IMR-90 (cell line): ENCODE measurements at regions of chr2 and their contacts with region 1.

Region 1: GRCh38 chr2:222146488-222146887 is 152.3 kb downstream of the PAX3 start:
- DNase-seq: no peak
- ATAC-seq: no peak
- H3K4me3 ChIP-seq: no peak overlapping the region
- H3K27ac ChIP-seq: no peak overlapping the region
- H3K4me1 ChIP-seq: no peaks in the 10 kb centered on the region
- H3K27me3 ChIP-seq: no peaks in the 10 kb centered on the region
- CTCF ChIP-seq: no peak
- POLR2A ChIP-seq: no peak
- RAD21 ChIP-seq: no peak

Region 2: DNA sequence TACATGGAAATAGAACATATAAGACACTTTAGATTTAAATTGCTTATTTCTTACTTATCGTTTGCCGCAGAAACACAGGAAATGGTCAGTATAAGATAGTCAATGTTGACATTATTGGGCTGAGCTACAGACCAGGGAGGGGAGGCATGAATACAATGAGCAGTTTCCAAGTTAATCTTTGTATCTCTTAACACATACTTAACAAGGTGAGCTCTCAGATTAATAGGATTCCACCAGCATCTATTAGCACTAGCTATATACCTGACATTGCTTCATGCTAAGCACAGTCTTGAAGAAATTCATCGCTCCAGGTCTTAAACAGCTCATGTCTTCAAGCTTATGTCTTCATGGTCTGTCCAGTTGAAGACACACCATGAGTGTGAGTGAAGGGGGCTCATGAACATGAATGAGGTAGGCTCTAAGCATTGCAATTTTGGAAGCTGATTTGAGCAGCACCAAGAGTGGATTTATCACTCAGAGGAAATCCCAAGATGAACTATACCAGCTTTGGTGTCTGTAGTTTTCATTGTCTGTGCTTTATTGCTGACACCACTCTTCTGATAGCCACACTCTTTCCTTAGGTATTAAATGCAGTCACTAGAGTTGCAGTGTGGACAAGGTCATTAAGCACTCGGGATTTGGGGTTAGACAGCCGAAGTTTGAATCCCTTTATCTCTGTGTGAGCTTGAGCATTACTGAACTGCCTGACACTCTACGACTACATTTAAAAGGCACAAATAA is 215.1 kb before region 1 on chr2:
- CTCF ChIA-PET with region 1: no interaction called
- POLR2A ChIA-PET with region 1: no interaction called
- dilution Hi-C with region 1: no loop called
- in situ Hi-C with region 1: no loop called
- intact Hi-C with region 1: no loop called
- DNase-seq: no peak
- ATAC-seq: no peak
- H3K4me3 ChIP-seq: no peak overlapping the region
- H3K27ac ChIP-seq: no peak overlapping the region
- H3K4me1 ChIP-seq: no peaks in the 10 kb centered on the region
- H3K27me3 ChIP-seq: no peaks in the 10 kb centered on the region
- CTCF ChIP-seq: no peak
- POLR2A ChIP-seq: no peak
- RAD21 ChIP-seq: no peak

Region 3: DNA sequence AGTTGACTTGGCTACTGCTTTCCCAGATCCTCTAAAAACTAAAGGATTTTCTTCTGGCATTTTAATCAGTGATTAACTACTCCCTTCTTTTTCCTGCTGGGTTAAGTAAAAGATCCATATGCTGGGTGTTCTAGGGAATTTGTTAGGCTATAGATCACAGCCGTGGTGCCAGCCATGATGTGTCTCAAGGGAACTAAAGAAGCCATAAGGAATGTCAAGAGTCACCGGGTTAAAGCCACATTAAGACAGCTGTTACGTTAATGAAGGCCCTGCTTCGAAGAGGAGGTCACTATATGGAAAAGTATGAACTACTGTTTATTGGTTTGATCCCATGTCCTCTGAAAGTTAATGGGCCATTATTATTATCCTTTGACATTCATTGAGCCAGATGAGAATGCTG is 81.6 kb after region 1 on chr2:
- CTCF ChIA-PET with region 1: no interaction called
- POLR2A ChIA-PET with region 1: interaction called, 11 read pairs
- dilution Hi-C with region 1: no loop called
- in situ Hi-C with region 1: no loop called
- intact Hi-C with region 1: no loop called
- DNase-seq: no peak
- ATAC-seq: no peak
- H3K4me3 ChIP-seq: no peak overlapping the region
- H3K27ac ChIP-seq: no peak overlapping the region
- H3K4me1 ChIP-seq: no peaks in the 10 kb centered on the region
- H3K27me3 ChIP-seq: no peaks in the 10 kb centered on the region
- CTCF ChIP-seq: no peak
- POLR2A ChIP-seq: no peak
- RAD21 ChIP-seq: no peak